ENCODE measurements at regions of chr4 and their contacts with region 1.

Region 1: GRCh38 chr4:1183985-1184773 is 11.8 kb upstream of the SPON2 start:
- DNase-seq: peak; percentile 14
- H3K4me3 Mint-ChIP-seq: peak overlapping the region; percentile 7
- H3K27ac Mint-ChIP-seq: no peak overlapping the region
- H3K4me1 Mint-ChIP-seq: peaks cover 41% of the 10 kb centered on the region
- H3K27me3 Mint-ChIP-seq: peaks cover 15% of the 10 kb centered on the region

Region 2: DNA sequence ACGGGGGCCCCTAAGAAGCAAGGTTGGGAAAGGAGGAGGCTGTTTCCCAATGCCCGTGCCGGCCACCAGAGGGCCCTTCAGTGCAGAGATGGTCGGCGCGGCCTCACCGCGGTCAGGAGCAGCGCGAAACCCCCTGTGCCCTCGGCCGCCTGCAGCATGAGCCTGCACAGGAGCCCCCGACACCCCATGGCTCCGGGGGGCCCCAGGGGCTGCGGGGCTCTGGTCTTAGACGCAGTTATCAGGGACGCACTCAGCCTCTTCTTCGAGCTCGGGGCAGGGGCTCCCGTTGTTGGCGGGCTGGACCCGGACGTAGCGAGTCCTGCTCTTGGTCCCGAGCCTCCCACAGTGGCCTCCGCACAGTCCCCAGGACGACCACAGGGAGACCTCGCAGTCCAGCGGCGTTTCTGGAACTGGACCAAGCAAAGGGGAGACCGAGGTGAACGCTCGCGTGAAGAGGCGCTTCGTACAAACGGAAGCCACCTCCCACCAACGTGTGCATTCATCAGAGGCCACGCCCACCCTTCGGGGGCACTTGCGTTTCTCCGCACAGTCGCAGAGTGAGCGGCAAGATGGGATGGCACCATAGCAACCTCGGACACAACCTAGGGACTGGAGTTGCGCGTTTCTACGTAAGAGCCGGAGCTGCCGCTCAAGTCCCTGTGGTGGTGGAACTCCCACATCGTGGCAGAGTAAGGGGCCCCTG is 16.8 kb before region 1 on chr4:
- CTCF ChIA-PET with region 1: interaction called, 14 read pairs
- POLR2A ChIA-PET with region 1: interaction called, 10 read pairs
- DNase-seq: peak; percentile 91
- H3K4me3 Mint-ChIP-seq: peak overlapping the region; percentile 78
- H3K27ac Mint-ChIP-seq: peak overlapping the region; percentile 63
- H3K4me1 Mint-ChIP-seq: peaks cover 33% of the 10 kb centered on the region
- H3K27me3 Mint-ChIP-seq: peaks cover 24% of the 10 kb centered on the region

Region 3: GRCh38 chr4:1172971-1173757 is 11.0 kb before region 1 on chr4:
- CTCF ChIA-PET with region 1: interaction called, 14 read pairs
- POLR2A ChIA-PET with region 1: interaction called, 12 read pairs
- DNase-seq: no peak
- H3K4me3 Mint-ChIP-seq: no peak overlapping the region
- H3K27ac Mint-ChIP-seq: no peak overlapping the region
- H3K4me1 Mint-ChIP-seq: peaks cover 19% of the 10 kb centered on the region
- H3K27me3 Mint-ChIP-seq: peaks cover 29% of the 10 kb centered on the region